GM10248 (cell line): ENCODE measurements at regions of chr19 and their contacts with region 1.

Region 1: GRCh38 chr19:7652061-7652641 is 15.2 kb downstream of the STXBP2 start:
- DNase-seq: peak; percentile 90
- CTCF ChIP-seq: peak; percentile 91

Region 2: DNA sequence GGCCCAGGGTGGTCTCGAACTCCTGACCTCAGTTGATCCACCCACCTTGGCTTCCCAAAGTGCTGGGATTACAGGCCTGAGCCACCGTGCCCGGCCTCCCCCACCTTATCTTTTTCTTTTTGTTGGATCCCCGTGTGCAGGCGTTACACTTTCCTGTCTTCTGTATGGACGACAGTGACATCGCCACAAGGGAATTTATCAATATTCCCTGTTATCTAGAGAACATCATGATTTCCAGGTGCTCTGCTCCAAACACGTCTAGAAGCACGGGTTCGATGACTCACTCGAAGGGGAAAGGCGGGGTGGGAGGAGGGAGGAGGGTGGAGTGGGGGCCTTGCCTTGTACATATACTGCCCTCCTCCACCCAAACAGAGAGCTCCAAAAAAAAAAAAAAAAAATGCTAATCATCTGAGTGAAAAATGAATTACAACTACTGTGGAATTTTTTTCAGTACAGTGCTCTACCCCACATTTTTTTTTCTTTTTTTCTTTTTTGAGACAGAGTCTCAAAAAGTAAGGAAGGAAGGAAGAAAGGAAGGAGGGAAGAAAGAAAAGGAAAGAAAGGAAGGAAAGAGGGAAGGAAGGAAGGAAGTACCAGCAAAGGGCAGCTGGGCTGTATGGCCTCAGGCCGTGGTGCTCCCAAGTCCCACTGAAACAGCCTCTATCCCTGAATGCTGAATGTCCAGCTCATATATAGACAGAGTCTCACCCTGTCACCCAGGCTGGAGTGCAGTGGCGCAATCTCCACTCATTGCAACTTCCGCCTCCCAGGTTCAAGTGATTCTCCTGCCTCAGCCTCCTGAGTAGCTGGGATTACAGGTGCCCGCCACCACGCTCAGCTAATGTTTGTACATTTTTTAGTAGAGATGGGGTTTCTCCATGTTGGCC is 394.8 kb before region 1 on chr19:
- CTCF ChIA-PET with region 1: no interaction called
- POLR2A ChIA-PET with region 1: no interaction called
- DNase-seq: no peak
- CTCF ChIP-seq: no peak

Region 3: GRCh38 chr19:7540761-7541491 is 111.2 kb before region 1 on chr19:
- CTCF ChIA-PET with region 1: no interaction called
- POLR2A ChIA-PET with region 1: no interaction called
- DNase-seq: no peak
- CTCF ChIP-seq: no peak

Region 4: GRCh38 chr19:7595466-7596133 is 56.6 kb before region 1 on chr19 and contains the start of gene CAMSAP3:
- CTCF ChIA-PET with region 1: no interaction called
- POLR2A ChIA-PET with region 1: no interaction called
- DNase-seq: peak; percentile 79
- CTCF ChIP-seq: no peak

Region 5: DNA sequence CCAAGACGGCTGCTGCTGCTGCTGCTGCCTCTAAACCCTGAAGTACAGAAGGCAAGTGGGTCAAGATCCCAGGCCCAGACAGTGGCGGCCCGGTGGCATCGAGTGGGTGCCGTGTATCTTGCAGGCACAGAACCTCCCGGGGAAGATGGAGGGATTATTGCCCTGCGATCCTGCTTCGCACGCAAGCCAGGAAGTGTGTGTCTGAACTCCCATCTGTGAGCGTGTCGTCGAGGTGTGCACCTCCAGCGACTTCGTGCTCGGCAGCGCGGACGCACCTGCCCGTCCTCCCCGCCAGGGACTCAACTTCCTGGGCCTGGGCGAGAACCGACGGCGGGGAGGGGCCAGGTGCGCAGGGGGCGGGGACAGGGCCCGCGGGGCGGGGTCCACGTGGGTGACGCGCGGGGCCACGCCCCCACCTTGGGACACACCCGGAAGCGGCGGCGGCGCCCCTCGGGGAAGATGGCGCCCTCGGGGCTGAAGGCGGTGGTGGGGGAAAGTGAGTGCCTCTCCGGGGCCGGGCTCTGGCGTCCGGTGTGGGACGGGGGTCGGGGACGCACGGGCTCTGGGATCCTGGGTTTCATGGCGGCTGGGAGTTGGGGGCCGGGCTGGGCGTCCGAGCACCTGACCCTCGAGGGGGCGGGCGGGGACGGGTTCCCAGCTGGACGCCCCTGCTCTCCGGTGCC is 15.3 kb before region 1 on chr19 and contains the start of gene STXBP2:
- CTCF ChIA-PET with region 1: interaction called, 15 read pairs
- POLR2A ChIA-PET with region 1: no interaction called
- DNase-seq: peak; percentile 99
- CTCF ChIP-seq: no peak

Region 6: DNA sequence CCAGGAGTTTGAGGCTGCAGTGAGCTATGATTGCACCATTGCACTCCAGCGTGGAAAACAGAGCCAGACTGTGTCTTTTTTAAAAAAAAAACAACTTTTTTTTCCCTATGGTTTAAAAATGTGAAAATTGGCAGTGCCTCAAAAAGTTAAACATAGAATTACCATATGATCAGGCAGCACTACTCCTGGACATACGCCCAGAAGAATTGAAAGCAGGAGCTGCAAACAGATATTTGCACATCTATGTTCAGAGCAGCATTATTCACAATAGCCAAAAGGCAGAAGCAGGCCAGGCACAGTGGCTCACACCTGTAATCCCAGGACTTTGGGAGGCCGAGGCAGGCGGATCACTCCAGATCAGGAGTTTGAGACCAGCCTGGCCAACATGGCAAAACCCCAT is 12.9 kb after region 1 on chr19:
- CTCF ChIA-PET with region 1: interaction called, 24 read pairs
- POLR2A ChIA-PET with region 1: no interaction called
- DNase-seq: no peak
- CTCF ChIP-seq: no peak